PC-9 (cell line): ENCODE measurements at regions of chr7 and their contacts with region 1.

Region 1: GRCh38 chr7:106041140-106041717 is 70.9 kb downstream of the SYPL1 start:
- DNase-seq: peak; percentile 39 to 48
- H3K4me3 ChIP-seq: no peak overlapping the region
- H3K27ac ChIP-seq: no peak overlapping the region
- H3K4me1 ChIP-seq: peaks cover 6% of the 10 kb centered on the region; the same call in 1 of the 2 replicates
- H3K27me3 ChIP-seq: 0 out of 2 replicates have a peak, but pooled peaks cover 7% of the 10 kb centered on the region
- CTCF ChIP-seq: peak; percentile 80

Region 2: GRCh38 chr7:105429746-105430612 is 611.2 kb before region 1 on chr7:
- CTCF ChIA-PET with region 1: no interaction called
- POLR2A ChIA-PET with region 1: no interaction called
- intact Hi-C with region 1: loop called (anchors 2 kb)
- DNase-seq: peak; percentile 39 to 45
- H3K4me3 ChIP-seq: no peak overlapping the region
- H3K27ac ChIP-seq: no peak overlapping the region
- H3K4me1 ChIP-seq: no peaks in the 10 kb centered on the region
- H3K27me3 ChIP-seq: no peaks in the 10 kb centered on the region
- CTCF ChIP-seq: peak; percentile 70

Region 3: GRCh38 chr7:105531792-105532671 is 509.2 kb before region 1 on chr7 and contains the start of gene RINT1:
- CTCF ChIA-PET with region 1: no interaction called
- POLR2A ChIA-PET with region 1: no interaction called
- intact Hi-C with region 1: loop called (anchors 5 kb)
- DNase-seq: peak; percentile 85 to 96
- H3K4me3 ChIP-seq: peak within 1 kb of the TSS; percentile 89
- H3K27ac ChIP-seq: peak within 1 kb of the TSS; percentile 66
- H3K4me1 ChIP-seq: peaks cover 11% of the 10 kb centered on the region
- H3K27me3 ChIP-seq: no peaks in the 10 kb centered on the region
- CTCF ChIP-seq: peak; percentile 56; the same call in 1 of the 2 replicates
- total RNA-seq, gene RINT1: 21.4 and 25.1 TPM in 2 replicates

Region 4: GRCh38 chr7:105652359-105652993 is 388.8 kb before region 1 on chr7:
- CTCF ChIA-PET with region 1: interaction called, 6 read pairs
- POLR2A ChIA-PET with region 1: no interaction called
- intact Hi-C with region 1: loop called (anchors 1 kb)
- DNase-seq: peak; percentile 43 to 79
- H3K4me3 ChIP-seq: no peak overlapping the region
- H3K27ac ChIP-seq: no peak overlapping the region
- H3K4me1 ChIP-seq: peaks cover 47% of the 10 kb centered on the region
- H3K27me3 ChIP-seq: no peaks in the 10 kb centered on the region
- CTCF ChIP-seq: peak; percentile 87

Region 5: DNA sequence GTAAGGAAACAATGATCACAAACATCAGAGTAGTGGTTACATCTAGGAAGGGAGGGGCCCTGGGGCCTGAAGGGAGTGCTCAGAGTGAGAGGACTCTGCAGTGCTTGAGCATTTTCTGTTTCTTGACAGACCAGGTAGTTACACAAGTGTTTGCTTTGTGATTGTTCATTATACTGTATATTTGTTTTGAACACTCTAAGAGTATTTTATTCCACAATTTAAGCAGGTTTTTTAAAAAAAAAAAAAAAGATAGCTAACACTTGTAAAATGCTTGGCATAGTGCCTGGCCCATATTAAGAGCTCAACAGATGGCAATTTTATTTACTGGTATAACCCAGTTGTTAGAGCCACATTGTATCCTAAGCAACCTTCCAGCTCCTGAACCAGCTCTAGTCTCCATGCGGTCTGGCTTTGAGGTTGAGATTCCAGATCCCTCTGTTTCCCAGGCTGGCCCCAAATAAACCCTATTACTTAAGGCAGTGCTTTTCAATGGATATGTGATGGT is 144.8 kb before region 1 on chr7:
- CTCF ChIA-PET with region 1: no interaction called
- POLR2A ChIA-PET with region 1: no interaction called
- intact Hi-C with region 1: no loop called
- DNase-seq: no peak
- H3K4me3 ChIP-seq: no peak overlapping the region
- H3K27ac ChIP-seq: no peak overlapping the region
- H3K4me1 ChIP-seq: no peaks in the 10 kb centered on the region
- H3K27me3 ChIP-seq: no peaks in the 10 kb centered on the region
- CTCF ChIP-seq: no peak

Region 6: DNA sequence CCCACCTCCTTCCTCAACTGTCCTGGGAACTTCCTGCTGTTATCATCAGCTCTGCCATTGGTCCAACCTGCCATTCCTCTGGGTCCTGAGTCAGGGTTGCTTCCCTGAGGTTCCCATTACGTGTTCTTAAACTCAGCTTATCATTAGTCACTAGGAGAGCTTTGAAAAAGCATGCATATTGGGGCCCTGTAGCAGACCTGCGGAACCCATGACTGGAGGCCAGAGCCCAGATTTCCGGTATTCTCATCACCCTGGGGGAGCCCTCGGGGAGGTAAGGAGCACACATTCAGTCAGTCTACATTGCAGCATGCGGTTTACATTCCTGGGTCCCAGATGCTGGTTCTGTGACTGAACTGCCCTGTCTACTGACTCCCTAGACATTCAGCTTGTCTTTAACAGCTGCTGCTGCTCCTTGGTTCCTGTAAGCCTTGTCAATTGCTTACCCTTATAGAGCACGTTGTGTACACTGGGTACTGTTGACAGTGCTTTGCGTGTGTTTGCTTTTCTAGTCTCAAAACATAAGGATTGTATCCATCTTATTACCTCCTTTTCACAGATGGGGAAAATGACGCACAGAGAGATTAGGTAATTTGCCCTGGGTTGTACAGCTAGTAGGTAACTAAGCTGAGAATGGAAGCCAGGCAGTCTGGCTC is 65.3 kb before region 1 on chr7:
- CTCF ChIA-PET with region 1: no interaction called
- POLR2A ChIA-PET with region 1: no interaction called
- intact Hi-C with region 1: no loop called
- DNase-seq: no peak
- H3K4me3 ChIP-seq: no peak overlapping the region
- H3K27ac ChIP-seq: no peak overlapping the region
- H3K4me1 ChIP-seq: no peaks in the 10 kb centered on the region
- H3K27me3 ChIP-seq: no peaks in the 10 kb centered on the region
- CTCF ChIP-seq: no peak